Prostate gland (tissue), 2 donors: ENCODE measurements at regions of chr11 and their contacts with region 1.

Region 1: DNA sequence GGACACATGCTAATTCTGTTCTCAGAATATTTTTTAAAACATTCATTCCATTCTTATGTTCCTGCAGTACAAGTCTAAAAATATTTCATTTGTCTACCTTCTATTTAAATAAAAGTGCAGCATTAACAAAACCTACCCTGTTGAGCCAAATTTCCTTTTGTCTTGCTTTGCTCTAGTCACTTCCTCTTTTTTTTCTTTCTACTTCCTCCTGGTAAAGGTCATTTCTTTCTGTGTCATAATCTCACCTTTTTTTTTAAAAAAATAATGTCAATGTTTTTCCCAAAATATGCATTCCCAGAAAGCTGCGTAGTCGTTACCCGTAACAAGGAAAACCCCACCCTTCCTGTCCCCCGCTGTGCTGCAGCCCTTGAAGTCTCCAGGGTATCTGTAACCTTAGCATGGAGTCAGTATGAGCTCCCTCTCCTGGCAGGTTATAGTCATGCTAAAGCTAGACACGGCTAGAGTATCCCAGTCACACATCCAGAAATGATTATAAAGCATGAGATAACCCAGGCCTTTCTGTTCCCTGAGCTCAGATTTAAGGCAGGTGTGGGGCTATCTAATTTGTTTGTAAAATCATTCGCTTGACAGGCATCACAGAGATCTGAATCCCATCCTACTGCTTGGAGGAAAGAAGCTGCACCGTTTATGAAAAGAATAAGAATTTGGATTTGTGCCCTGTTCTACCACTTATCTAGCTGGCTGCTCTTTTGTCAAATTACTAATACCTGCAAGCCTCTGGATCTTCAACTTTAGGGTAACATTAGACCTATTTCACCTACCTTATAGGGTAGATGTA is 51.1 kb upstream of the EED start:
- DNase-seq: peak; percentile 56
- H3K4me3 ChIP-seq: no peak overlapping the region
- H3K27ac ChIP-seq: no peak overlapping the region
- H3K4me1 ChIP-seq: no peaks in the 10 kb centered on the region
- H3K27me3 ChIP-seq: no peaks in the 10 kb centered on the region
- CTCF ChIP-seq: peak; percentile 34 to 69 (median 58)
- POLR2A ChIP-seq: no peak

Region 2: GRCh38 chr11:86041975-86042378 is 151.5 kb before region 1 on chr11:
- intact Hi-C with region 1: loop called (anchors 2 kb)
- DNase-seq: peak; percentile 84
- H3K4me3 ChIP-seq: no peak overlapping the region
- H3K27ac ChIP-seq: peak overlapping the region in 1 of 2 donors; percentile 26
- H3K4me1 ChIP-seq: no peaks in the 10 kb centered on the region
- H3K27me3 ChIP-seq: no peaks in the 10 kb centered on the region
- CTCF ChIP-seq: peak; percentile 86 to 94 (median 88)
- POLR2A ChIP-seq: no peak